Activated CD4-positive, alpha-beta T cell treated with anti-CD3 and anti-CD28 coated beads for 36 hours (primary cell): ENCODE measurements at regions of chr17 and their contacts with region 1.

Region 1: DNA sequence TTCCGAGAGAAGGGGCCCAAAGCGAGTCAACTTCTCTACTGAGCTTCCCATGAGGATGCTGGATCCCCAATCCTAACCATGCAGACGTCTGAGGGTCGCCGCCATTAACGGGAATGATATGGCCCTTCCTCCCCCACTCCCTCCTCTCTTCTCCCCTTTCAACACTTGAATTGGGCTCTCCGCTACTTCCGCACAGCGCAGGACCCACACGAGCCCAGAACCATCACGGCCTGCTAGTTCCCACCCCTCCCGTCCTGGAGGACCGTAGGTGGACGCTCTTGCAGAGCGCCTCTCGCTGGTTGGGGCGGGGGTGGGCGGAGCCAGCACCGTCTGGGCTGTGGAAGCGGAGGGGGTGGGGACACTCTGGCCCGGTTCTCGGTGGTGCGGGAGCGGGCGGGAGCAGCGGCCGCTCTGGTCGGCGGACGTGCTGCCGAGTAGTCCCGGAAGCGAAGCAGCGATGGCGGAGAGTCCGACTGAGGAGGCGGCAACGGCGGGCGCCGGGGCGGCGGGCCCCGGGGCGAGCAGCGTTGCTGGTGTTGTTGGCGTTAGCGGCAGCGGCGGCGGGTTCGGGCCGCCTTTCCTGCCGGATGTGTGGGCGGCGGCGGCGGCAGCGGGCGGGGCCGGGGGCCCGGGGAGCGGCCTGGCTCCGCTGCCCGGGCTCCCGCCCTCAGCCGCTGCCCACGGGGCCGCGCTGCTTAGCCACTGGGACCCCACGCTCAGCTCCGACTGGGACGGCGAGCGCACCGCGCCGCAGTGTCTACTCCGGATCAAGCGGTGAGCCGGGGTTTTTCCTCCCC is at the start of gene UBE2Z:
- DNase-seq: peak; percentile 94
- ATAC-seq: peak; percentile 86
- H3K4me3 Mint-ChIP-seq: peak within 1 kb of the TSS; percentile 89
- H3K27ac Mint-ChIP-seq: peak within 1 kb of the TSS; percentile 97
- H3K4me1 Mint-ChIP-seq: peaks cover 46% of the 10 kb centered on the region
- H3K27me3 Mint-ChIP-seq: no peaks in the 10 kb centered on the region
- total RNA-seq, gene UBE2Z: 104 TPM

Region 2: GRCh38 chr17:48107168-48108132 is 800.8 kb before region 1 on chr17 and contains the start of gene SNX11:
- CTCF ChIA-PET with region 1: no interaction called
- POLR2A ChIA-PET with region 1: no interaction called
- intact Hi-C with region 1: loop called in 1 of 2 experiments (anchors 2 kb)
- DNase-seq: peak; percentile 97
- ATAC-seq: peak; percentile 87
- H3K4me3 Mint-ChIP-seq: peak within 1 kb of the TSS; percentile 97
- H3K27ac Mint-ChIP-seq: peak within 1 kb of the TSS; percentile 98
- H3K4me1 Mint-ChIP-seq: peaks cover 61% of the 10 kb centered on the region
- H3K27me3 Mint-ChIP-seq: no peaks in the 10 kb centered on the region
- total RNA-seq, gene SNX11: 18.0 to 21.4 TPM

Region 3: DNA sequence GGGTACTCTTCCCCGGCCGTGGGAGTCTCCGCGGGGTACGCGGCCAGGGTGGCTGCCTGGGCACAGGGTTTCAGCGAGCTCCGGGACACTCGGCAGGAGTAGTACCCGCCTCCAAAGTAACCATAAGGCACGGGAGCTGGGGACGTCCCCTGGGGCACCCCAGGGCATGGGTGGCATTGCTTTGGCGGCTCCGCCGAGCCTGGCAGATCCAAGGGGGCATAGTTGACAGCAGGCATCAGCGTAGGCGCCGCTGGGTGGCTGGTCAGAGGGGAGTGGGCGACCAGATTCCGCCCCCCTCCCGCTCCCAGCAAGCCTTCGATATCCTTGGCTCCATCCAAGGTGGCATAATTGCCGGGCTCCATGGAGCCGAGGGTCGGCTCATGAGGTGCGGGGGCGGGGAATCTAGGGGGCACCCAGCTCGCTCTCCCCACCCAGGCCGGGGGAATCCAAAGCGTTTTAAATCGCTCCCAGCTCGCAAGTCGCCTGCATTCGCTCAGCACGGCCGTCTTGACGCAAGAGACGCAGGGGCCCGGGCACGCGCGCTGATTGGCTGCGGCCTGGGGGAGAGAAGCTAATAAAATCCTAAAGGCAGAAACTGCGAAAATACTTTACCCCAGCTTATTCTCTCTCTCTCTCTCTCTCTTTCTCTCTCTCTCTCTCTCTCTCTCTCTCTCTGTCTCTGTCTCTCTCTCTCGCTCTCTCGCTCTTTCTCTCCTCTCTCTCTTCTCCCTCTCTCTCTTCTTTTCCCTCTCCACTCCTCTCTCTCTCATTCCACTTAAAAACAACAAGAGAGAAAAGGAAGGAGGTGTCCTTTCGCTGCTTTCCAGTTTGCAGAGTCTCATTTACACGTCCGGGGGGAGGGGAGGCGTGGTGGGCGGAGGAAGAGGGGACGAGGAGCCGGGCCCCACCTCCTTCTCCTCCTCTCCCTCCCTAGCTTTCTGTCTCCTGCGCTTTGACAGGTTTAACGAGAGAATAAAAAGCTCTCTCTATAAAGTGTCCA is 179.7 kb before region 1 on chr17 and contains the start of gene HOXB13:
- CTCF ChIA-PET with region 1: no interaction called
- POLR2A ChIA-PET with region 1: no interaction called
- intact Hi-C with region 1: no loop called
- DNase-seq: peak; percentile 70
- ATAC-seq: peak; percentile 52
- H3K4me3 Mint-ChIP-seq: peak within 1 kb of the TSS; percentile 37
- H3K27ac Mint-ChIP-seq: no peak within 1 kb of the TSS
- H3K4me1 Mint-ChIP-seq: peaks cover 34% of the 10 kb centered on the region
- H3K27me3 Mint-ChIP-seq: peaks cover 82% of the 10 kb centered on the region
- total RNA-seq, gene HOXB13: not detected

Region 4: DNA sequence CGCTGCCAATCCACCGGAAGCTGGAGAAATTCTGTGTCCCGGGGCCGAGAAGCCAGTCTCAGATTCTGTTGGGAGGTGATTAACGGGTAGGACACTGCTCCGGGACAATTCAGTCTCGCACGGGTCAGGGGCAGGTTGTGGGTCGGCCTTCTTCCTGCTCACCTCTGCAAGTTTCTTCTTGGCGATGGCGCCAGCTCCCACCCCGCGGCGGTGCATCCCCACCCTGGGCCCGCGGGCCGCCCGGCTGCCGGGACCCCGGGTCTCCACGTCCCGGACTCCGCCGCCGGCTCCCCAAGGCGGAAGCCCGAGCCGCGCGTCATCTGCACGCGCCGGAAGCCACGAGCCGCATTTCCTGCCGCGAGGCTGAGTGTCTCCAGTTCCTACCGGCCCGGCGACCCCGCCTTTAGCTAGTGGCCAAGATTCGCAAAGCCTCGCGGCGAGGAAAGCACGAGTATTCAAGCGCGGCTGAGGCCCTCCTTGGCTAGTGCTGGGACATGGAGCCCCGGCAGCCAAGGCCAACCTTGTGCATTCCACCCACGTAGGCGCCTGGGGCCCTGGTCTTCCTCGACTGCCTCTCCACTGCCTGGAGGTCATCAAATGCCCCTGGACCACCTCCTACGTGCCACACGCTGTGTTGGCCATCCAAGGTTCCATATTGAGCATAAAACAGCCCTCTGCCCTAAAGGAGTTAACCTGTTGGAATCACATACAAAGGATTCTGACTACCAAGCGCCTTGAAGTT is 36.4 kb after region 1 on chr17 and contains the start of gene SNF8:
- CTCF ChIA-PET with region 1: no interaction called
- POLR2A ChIA-PET with region 1: interaction called, 4 read pairs
- intact Hi-C with region 1: loop called in 1 of 2 experiments (anchors 1 kb)
- DNase-seq: peak; percentile 96
- ATAC-seq: peak; percentile 95
- H3K4me3 Mint-ChIP-seq: peak within 1 kb of the TSS; percentile 92
- H3K27ac Mint-ChIP-seq: peak within 1 kb of the TSS; percentile 96
- H3K4me1 Mint-ChIP-seq: peaks cover 8% of the 10 kb centered on the region
- H3K27me3 Mint-ChIP-seq: no peaks in the 10 kb centered on the region
- total RNA-seq, gene SNF8: 59.5 to 94.0 TPM